B cell (primary cell): ENCODE measurements at regions of chr19 and their contacts with region 1.

Region 1: GRCh38 chr19:47094557-47095475 is 18.8 kb downstream of the ZC3H4 start:
- DNase-seq: peak; percentile 29
- ATAC-seq: no peak
- H3K4me3 ChIP-seq: no peak overlapping the region
- H3K4me3 Mint-ChIP-seq: peak overlapping the region; percentile 69
- H3K27ac ChIP-seq: peak overlapping the region; percentile 38 to 60
- H3K27ac Mint-ChIP-seq: peak overlapping the region; percentile 89
- H3K4me1 ChIP-seq: peaks cover 5 to 33% of the 10 kb centered on the region in 2 donors
- H3K4me1 Mint-ChIP-seq: peaks cover 37% of the 10 kb centered on the region
- H3K27me3 ChIP-seq: no peaks in the 10 kb centered on the region
- H3K27me3 Mint-ChIP-seq: no peaks in the 10 kb centered on the region
- CTCF ChIP-seq: no peak

Region 2: DNA sequence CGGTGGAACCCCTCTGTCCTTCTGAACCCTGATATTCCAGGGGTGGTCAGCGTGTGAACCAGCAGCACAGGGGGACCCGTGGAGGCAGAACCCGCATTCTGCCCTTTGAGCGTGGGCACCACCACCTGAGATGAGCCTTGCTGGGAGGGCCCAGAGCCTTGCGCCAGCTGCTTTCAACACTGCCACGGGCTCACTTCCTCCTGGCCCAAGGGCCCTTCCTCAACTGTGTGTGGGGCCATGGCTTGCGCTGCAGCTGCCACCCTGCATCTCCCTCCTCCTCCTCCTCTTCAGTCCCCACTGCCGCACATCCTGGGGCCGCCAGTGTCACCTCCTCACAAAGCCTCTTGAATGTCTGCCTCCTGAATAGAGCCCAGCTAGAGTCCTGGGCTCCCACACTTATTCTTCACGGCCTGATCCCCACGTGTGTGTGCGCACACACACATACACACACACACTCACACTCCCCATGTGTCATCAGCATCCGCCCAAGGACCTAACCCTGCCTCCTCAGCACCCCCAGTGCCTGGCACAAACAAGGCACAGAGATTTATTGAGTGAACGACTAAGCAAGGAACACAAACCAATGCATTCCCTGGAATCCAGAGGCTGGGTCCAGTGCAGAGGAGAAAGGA is 19.5 kb before region 1 on chr19:
- CTCF ChIA-PET with region 1: interaction called, 13 read pairs
- POLR2A ChIA-PET with region 1: no interaction called
- intact Hi-C with region 1: loop called (anchors 1 kb)
- DNase-seq: no peak
- ATAC-seq: no peak
- H3K4me3 ChIP-seq: no peak overlapping the region
- H3K4me3 Mint-ChIP-seq: no peak overlapping the region
- H3K27ac ChIP-seq: no peak overlapping the region
- H3K27ac Mint-ChIP-seq: peak overlapping the region; percentile 54
- H3K4me1 ChIP-seq: no peaks in the 10 kb centered on the region
- H3K4me1 Mint-ChIP-seq: peaks cover 4% of the 10 kb centered on the region
- H3K27me3 ChIP-seq: no peaks in the 10 kb centered on the region
- H3K27me3 Mint-ChIP-seq: no peaks in the 10 kb centered on the region
- CTCF ChIP-seq: no peak